ENCODE measurements at regions of chr14 and their contacts with region 1.

Region 1: DNA sequence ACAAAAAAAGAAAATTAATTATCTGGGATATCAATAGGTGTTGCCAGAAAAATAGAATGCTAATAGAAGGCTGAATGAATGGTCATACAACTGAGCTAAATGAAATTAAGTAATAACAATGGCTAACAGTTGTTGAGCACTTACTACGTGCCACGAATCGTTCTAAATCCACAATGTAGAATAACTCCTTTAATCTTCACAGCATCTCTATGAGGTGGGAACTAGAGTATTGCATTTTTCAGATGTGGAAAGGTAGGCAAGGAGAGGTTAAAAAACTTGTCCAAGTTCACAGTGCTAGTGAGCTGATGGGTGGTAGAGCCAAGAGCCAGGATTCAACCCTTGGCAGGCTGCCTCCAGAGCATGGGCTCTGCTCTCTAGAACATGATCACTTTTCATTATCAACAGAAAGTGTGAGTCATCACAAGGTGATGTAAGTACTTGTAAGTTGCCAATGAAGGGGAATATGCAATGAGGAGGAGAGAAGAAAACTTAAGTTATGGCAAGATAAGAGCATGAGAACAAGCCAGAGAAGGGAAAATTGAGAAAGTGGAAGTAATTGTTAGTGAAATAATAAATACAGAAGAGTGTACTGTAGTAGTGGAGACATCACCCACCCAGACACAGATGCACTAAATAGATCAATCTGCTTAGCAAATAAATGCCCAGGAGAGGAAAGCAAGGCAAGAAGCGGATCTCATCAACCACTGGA is 122.1 kb downstream of the PRKD1 start:
- DNase-seq: peak; percentile 59
- H3K4me3 Mint-ChIP-seq: peak overlapping the region; percentile 10
- H3K27ac Mint-ChIP-seq: peak overlapping the region; percentile 98
- H3K4me1 Mint-ChIP-seq: peaks cover 28% of the 10 kb centered on the region
- H3K27me3 Mint-ChIP-seq: no peaks in the 10 kb centered on the region
- CTCF ChIP-seq: no peak

Region 2: GRCh38 chr14:29918981-29919380 is 113.4 kb after region 1 on chr14:
- CTCF ChIA-PET with region 1: no interaction called
- intact Hi-C with region 1: loop called (anchors 5 kb)
- DNase-seq: no peak
- H3K4me3 Mint-ChIP-seq: no peak overlapping the region
- H3K27ac Mint-ChIP-seq: no peak overlapping the region
- H3K4me1 Mint-ChIP-seq: no peaks in the 10 kb centered on the region
- H3K27me3 Mint-ChIP-seq: no peaks in the 10 kb centered on the region
- CTCF ChIP-seq: no peak